ENCODE measurements at regions of chr4 and their contacts with region 1.

Region 1: GRCh38 chr4:159298502-159298901 is 195.6 kb downstream of the RAPGEF2 start:
- DNase-seq: no peak
- ATAC-seq: no peak
- H3K4me3 ChIP-seq: no peak overlapping the region
- H3K4me3 Mint-ChIP-seq: no peak overlapping the region
- H3K27ac ChIP-seq: no peak overlapping the region
- H3K27ac Mint-ChIP-seq: no peak overlapping the region
- H3K4me1 ChIP-seq: no peaks in the 10 kb centered on the region
- H3K4me1 Mint-ChIP-seq: peaks cover 1 to 4% (median 4%) of the 10 kb centered on the region in 3 donors
- H3K27me3 ChIP-seq: no peaks in the 10 kb centered on the region
- H3K27me3 Mint-ChIP-seq: no peaks in the 10 kb centered on the region

Region 2: DNA sequence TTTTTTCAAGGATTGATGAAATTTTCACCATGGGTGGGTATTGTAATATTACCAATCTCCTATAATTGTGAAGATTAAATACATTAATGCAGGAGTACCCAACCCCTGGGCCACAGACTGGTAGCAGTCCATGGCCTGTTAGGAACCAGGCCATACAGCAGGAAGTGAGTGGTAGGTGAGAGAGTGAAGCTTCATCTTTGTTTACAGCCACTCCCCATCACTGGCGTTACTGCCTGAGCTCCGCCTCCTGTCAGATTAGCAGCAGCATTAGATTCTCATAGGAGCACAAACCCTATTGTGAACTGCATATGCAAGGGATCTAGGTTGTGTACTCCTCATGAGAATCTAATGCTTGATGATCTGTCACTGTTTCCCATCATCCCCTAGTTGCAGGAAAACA is 180.5 kb before region 1 on chr4:
- CTCF ChIA-PET with region 1: no interaction called
- POLR2A ChIA-PET with region 1: interaction called in 1 of 2 experiments, 10 read pairs
- DNase-seq: peak in 9 of 35 experiments; percentile 3 to 41 (median 18)
- ATAC-seq: peak; percentile 60 to 92 (median 66)
- H3K4me3 ChIP-seq: no peak overlapping the region
- H3K4me3 Mint-ChIP-seq: no peak overlapping the region
- H3K27ac ChIP-seq: peak overlapping the region; percentile 50
- H3K27ac Mint-ChIP-seq: peak overlapping the region; percentile 11 to 58
- H3K4me1 ChIP-seq: peaks cover 0 to 4% of the 10 kb centered on the region in 2 experiments
- H3K4me1 Mint-ChIP-seq: peaks cover 25 to 37% (median 29%) of the 10 kb centered on the region in 3 donors
- H3K27me3 ChIP-seq: no peaks in the 10 kb centered on the region
- H3K27me3 Mint-ChIP-seq: no peaks in the 10 kb centered on the region

Region 3: DNA sequence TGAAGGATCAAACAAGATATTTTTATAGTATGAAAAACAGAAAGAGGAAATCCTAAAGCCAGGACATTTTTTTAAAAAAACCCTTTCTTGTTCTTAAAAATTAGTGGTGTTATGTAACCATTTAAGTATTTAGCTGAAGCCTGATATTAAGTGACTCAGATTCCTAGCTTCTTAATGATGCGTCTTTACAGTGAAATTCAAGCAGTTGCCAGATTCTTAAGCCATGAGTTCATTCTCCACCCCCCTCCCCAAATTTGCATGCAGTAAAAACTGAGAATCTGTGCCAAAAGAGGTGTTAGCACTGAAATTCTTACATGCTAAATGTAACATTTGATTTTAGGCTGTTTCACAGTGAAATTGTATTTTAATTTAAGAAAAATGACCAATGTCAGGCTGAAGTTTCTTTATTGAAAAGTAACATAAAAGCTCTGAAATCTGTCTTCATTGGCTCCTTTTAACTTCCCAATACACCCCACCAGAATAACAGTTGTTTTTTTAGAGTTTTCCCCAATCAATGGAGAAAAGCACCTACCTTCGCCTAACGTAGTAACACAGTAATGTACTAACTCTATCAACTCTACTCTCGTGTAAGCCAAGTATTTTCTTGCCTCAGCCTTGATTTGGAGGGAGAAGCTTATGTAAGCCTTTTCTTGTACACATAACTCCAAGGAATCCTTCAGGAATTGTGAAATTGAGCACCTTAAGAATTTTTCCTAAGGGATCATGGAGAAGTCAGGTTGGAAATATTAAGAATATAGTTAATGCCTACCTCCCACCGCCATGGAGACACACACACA is 14.6 kb before region 1 on chr4:
- CTCF ChIA-PET with region 1: no interaction called
- POLR2A ChIA-PET with region 1: no interaction called
- DNase-seq: no peak
- ATAC-seq: no peak
- H3K4me3 ChIP-seq: no peak overlapping the region
- H3K4me3 Mint-ChIP-seq: no peak overlapping the region
- H3K27ac ChIP-seq: no peak overlapping the region
- H3K27ac Mint-ChIP-seq: no peak overlapping the region
- H3K4me1 ChIP-seq: peaks cover 0 to 2% of the 10 kb centered on the region in 2 experiments
- H3K4me1 Mint-ChIP-seq: peaks cover 0 to 2% (median 0%) of the 10 kb centered on the region in 3 donors
- H3K27me3 ChIP-seq: no peaks in the 10 kb centered on the region
- H3K27me3 Mint-ChIP-seq: no peaks in the 10 kb centered on the region

Region 4: GRCh38 chr4:159481911-159482310 is 183.4 kb after region 1 on chr4:
- CTCF ChIA-PET with region 1: no interaction called
- POLR2A ChIA-PET with region 1: no interaction called
- DNase-seq: no peak
- ATAC-seq: no peak
- H3K4me3 ChIP-seq: no peak overlapping the region
- H3K4me3 Mint-ChIP-seq: no peak overlapping the region
- H3K27ac ChIP-seq: no peak overlapping the region
- H3K27ac Mint-ChIP-seq: no peak overlapping the region
- H3K4me1 ChIP-seq: no peaks in the 10 kb centered on the region
- H3K4me1 Mint-ChIP-seq: no peaks in the 10 kb centered on the region
- H3K27me3 ChIP-seq: no peaks in the 10 kb centered on the region
- H3K27me3 Mint-ChIP-seq: peaks cover 8 to 21% of the 10 kb centered on the region in 2 donors